ENCODE measurements at regions of chr12 and their contacts with region 1.

Region 1: DNA sequence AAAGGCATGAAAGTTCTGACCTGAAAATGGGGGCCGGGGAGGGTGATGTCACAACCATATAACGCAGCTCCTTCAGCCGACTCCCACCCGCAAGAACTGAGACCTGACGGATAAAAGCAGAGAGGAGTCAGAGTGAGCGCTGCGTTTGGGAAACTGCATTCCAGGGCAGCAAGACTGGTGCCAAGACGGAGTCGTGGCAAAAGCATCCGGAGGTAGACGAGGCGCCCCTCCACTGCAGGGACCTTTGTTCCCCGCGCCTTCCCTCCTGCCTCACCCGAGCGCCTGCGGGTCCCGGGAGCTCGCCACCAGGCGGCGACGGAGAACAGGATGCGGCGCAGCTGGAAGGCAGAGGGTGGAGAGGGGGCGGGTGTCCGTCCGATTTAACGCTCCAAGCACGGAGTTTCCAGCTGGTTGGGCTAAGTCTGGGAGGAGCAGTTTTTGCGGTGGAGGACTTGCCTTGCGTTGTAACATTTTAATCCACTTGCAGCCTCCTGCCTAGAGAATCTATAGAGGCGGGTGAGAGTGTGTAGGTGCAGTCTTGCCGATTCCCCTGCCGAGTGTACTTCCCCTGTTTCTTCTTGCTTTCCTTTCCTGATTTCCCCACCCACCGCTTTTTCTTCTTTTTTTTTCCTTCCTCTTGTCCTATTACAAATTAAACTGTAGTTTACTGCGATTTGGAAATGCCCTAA is 1.2 kb upstream of the CPNE8 start:
- DNase-seq: peak; percentile 96

Region 2: GRCh38 chr12:38332814-38333213 is 573.8 kb before region 1 on chr12:
- in situ Hi-C with region 1: loop called (anchors 25 kb)
- DNase-seq: no peak

Region 3: GRCh38 chr12:39476118-39476517 is 569.5 kb after region 1 on chr12:
- in situ Hi-C with region 1: no loop called
- DNase-seq: no peak

Measured in KBM-7 (cell line).